Endothelial cell of umbilical vein (primary cell): ENCODE measurements at regions of chr20 and their contacts with region 1.

Region 1: GRCh38 chr20:62327726-62328495 is 25.1 kb downstream of the ADRM1 start:
- DNase-seq: no peak
- H3K4me3 ChIP-seq: no peak overlapping the region
- H3K27ac ChIP-seq: no peak overlapping the region
- H3K4me1 ChIP-seq: no peaks in the 10 kb centered on the region
- H3K27me3 ChIP-seq: no peaks in the 10 kb centered on the region
- CTCF ChIP-seq: no peak
- POLR2A ChIP-seq: no peak

Region 2: GRCh38 chr20:61744691-61745396 is 583.1 kb before region 1 on chr20:
- CTCF ChIA-PET with region 1: no interaction called
- POLR2A ChIA-PET with region 1: no interaction called
- dilution Hi-C with region 1: no loop called
- intact Hi-C with region 1: no loop called
- DNase-seq: no peak
- H3K4me3 ChIP-seq: no peak overlapping the region
- H3K27ac ChIP-seq: no peak overlapping the region
- H3K4me1 ChIP-seq: no peaks in the 10 kb centered on the region
- H3K27me3 ChIP-seq: no peaks in the 10 kb centered on the region
- CTCF ChIP-seq: no peak
- POLR2A ChIP-seq: no peak

Region 3: DNA sequence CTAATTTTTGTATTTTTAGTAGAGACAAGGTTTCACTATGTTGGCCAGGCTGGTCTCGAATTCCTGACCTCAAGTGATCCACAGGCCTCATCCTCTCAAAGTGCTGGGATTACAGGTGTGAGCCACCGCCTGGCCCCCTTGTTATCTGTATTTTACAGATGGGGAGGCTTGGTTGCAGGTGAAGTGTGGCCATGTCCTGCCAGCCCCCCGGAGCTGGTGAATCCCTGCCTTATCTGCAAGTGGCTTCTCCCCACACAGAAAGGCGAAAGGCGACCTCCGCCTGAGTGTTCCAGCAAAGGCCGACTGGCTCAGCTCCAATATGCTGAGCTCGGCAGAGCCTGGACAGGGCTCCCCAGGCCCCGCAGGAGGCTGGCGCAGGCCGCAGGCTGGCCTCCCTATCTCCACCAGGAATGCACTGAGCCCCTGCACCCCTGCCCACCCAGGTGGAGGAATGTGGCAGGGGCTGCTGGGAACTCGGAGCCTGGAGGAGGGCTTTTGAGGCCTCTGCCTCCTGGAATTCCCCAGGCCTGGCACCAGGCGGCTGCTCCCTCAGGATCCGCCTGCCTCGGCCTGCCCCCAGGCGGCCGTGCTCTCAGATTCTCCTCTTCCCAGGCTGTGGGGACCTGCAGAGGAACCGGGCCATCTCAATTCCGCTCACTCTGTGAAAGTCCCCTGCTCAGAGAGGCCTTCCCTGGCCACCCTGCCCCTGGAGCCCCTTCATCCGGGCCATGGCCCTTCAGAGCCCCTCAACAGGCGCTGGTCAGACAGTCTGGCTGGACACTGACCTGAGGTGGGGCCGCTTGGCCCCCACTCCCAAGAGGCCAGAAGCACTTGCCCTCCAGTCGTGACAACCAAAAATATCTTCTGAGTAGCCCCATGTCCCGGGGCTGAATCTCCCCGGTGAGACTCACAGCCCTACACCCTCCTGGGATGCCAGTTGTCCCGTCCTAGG is 48.5 kb after region 1 on chr20:
- CTCF ChIA-PET with region 1: interaction called, 12 read pairs
- POLR2A ChIA-PET with region 1: no interaction called
- dilution Hi-C with region 1: no loop called
- intact Hi-C with region 1: no loop called
- DNase-seq: no peak
- H3K4me3 ChIP-seq: no peak overlapping the region
- H3K27ac ChIP-seq: no peak overlapping the region
- H3K4me1 ChIP-seq: peaks cover 11% of the 10 kb centered on the region
- H3K27me3 ChIP-seq: no peaks in the 10 kb centered on the region
- CTCF ChIP-seq: peak; percentile 27 to 57
- POLR2A ChIP-seq: no peak